ENCODE measurements at regions of chr2 and their contacts with region 1.

Region 1: GRCh38 chr2:232438951-232439757 is 16.8 kb upstream of the ALPI start:
- DNase-seq: peak; percentile 40
- ATAC-seq: peak; percentile 67
- H3K4me3 ChIP-seq: no peak overlapping the region
- H3K27ac ChIP-seq: no peak overlapping the region
- H3K4me1 ChIP-seq: no peaks in the 10 kb centered on the region
- H3K27me3 ChIP-seq: no peaks in the 10 kb centered on the region
- CTCF ChIP-seq: peak; percentile 36

Region 2: DNA sequence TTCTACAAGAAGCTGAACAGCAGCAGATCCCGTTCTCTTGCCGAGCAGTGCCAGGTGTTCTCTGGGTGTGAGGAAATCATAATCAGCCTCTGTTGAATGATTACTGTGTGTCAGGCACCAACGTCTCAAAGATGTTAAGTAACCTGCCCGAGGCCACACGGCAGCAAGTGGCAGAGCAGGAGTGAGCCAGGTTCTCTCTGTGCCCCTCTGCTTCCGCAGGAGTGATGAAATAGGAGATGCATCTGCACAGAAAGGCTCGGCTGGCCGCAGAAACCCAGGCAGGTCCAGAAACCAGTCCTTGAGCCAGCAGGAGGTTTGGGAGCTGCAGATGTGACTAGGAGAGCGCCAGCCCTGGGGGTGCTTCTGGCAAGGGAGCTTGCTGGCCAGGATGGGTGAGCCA is 584.5 kb before region 1 on chr2:
- CTCF ChIA-PET with region 1: no interaction called
- POLR2A ChIA-PET with region 1: no interaction called
- intact Hi-C with region 1: loop called (anchors 2 kb)
- DNase-seq: no peak
- ATAC-seq: no peak
- H3K4me3 ChIP-seq: no peak overlapping the region
- H3K27ac ChIP-seq: no peak overlapping the region
- H3K4me1 ChIP-seq: no peaks in the 10 kb centered on the region
- H3K27me3 ChIP-seq: peaks cover 19% of the 10 kb centered on the region
- CTCF ChIP-seq: no peak

Region 3: GRCh38 chr2:231900486-231900942 is 538.6 kb before region 1 on chr2:
- CTCF ChIA-PET with region 1: interaction called, 3 read pairs
- POLR2A ChIA-PET with region 1: no interaction called
- intact Hi-C with region 1: loop called (anchors 1 kb)
- DNase-seq: peak; percentile 90
- ATAC-seq: peak; percentile 97
- H3K4me3 ChIP-seq: no peak overlapping the region
- H3K27ac ChIP-seq: no peak overlapping the region
- H3K4me1 ChIP-seq: 0 out of 2 replicates have a peak, but pooled peaks cover 2% of the 10 kb centered on the region
- H3K27me3 ChIP-seq: no peaks in the 10 kb centered on the region
- CTCF ChIP-seq: peak; percentile 83

Region 4: DNA sequence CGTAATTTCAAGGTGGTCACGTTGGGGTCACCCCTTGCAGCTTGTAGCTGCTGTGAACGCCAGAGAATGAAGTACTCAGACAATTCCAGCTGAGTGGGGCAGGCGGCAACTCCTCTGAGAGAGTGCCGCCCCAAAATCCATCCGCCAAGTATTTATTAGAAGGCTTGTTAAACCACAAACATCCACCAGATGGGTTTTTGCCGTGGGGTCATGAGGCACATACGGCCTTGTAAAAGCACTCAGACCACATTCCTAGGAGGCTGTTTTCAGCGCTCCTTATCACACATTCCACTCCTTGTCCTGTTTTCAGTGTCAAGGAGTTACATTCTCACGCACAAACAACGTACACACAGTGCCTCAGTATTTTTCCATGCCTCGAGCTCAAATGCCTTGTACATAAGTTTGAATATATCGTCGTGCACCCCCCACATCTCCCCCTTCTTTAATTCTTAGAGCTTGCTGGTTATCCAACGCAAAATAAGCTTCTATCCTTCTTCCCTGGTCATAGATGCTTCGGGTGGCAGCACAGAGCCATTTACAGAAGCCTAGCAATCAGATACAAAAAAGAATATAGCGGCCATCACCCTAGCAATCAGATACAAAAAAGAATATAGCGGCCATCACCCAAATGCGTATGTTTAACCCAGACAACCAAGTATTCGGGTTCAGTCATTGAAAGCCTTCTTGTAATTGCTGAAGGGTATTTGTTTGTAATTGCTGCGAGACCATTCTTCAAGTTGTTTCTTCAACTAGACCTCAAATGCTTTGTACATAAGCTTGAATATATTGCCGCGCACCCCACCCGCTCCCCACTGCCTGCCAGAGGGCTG is 53.3 kb before region 1 on chr2:
- CTCF ChIA-PET with region 1: interaction called, 10 read pairs
- POLR2A ChIA-PET with region 1: no interaction called
- intact Hi-C with region 1: loop called (anchors 1 kb)
- DNase-seq: peak; percentile 77
- ATAC-seq: peak; percentile 84
- H3K4me3 ChIP-seq: peak overlapping the region; percentile 30; the same call in 1 of the 2 replicates
- H3K27ac ChIP-seq: peak overlapping the region; percentile 62
- H3K4me1 ChIP-seq: peaks cover 14% of the 10 kb centered on the region; the same call in 1 of the 2 replicates
- H3K27me3 ChIP-seq: no peaks in the 10 kb centered on the region
- CTCF ChIP-seq: no peak

Measured in PC-3 (cell line).